ENCODE measurements at regions of chr16 and their contacts with region 1.

Region 1: DNA sequence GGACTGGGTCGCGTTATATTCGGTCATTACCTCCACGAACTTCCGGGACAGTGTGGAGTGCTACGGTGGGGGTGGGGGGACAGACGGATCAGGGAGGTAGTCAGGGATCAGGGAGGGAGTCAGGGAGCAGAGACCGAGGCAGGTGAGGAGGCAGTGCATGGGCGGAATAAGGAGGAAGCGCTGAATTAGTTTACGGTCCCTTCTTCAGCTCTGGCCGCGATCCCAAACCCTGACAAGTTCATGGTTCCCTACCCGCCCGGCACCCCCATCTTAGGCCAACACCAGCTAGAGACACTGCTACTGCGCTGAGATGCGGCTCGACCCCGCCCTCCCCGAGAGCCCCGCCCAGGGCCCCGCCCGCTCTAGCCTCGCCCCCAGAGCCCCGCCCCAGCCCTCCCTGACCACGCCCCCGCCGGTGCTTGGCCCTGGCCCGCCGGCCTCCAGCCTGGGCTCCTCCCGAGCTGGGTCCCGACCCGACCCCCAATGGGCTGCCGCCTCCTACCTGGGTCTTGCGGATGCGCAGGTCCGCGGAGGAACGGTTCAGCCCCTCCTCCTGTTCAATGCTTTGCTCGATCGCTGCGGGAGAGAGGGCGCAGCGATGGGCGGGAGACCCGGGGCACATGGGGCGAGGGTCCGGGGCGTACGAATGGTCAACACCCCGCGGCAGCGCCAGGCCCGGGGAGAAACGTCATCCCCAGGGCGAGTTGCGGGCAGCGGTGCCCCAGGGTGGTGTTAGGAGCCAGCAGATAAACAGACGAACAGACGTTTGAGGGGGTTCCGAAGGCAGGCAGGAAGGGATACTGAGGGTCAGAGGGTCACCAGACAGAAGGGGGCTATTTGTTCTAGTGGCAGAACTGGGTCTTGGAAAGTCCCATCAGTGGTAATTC is 12.2 kb downstream of the HSD3B7 start:
- DNase-seq: peak in 1 of 2 donors; percentile 90
- H3K4me3 ChIP-seq: peak overlapping the region; percentile 65 to 78
- H3K27ac ChIP-seq: peak overlapping the region; percentile 90 to 94
- H3K4me1 ChIP-seq: peaks cover 9 to 27% of the 10 kb centered on the region in 2 donors
- H3K27me3 ChIP-seq: no peaks in the 10 kb centered on the region
- CTCF ChIP-seq: no peak

Region 2: DNA sequence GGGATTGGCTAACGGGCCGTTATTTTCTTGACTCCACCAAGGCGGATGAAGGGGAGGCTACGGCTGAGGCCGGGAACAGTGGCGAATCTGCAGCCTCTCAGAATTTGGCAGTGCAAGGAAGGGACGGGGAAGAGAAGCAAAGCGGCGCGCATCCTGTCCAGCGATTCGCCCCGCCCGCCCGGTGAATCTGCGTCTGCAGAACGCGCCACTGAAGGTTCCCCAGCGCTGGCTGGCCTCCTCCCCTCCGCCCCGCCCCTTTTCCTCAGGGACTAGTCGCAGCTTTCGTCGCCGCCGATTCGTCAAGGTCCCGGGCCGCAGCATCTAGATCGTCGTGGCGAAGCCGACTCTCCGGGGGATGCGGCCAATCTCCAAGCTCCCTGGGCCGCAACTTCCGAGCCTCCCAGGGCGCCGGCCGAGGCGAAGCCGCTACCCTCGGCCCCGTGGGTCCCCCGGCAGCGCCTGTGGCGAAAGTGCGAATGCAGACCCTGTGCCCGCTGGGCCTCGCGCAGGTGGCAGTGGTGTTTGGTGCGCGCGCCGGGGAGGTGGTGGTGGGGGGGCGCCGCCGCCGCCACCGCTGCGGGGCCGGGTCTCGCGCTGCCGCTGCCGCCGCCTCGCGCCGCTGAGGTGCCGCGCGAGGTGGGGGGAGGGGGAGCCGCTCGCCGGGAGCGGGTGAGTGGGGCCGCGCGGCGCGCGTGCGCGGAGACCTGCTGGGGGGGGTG is 39.6 kb before region 1 on chr16 and contains the start of gene SETD1A:
- intact Hi-C with region 1: loop called (anchors 5 kb)
- DNase-seq: peak; percentile 81 to 98
- H3K4me3 ChIP-seq: peak within 1 kb of the TSS; percentile 94 to 95
- H3K27ac ChIP-seq: peak within 1 kb of the TSS; percentile 98 to 99
- H3K4me1 ChIP-seq: peaks cover 3 to 22% of the 10 kb centered on the region in 2 donors
- H3K27me3 ChIP-seq: no peaks in the 10 kb centered on the region
- CTCF ChIP-seq: peak in 1 of 3 experiments; percentile 11
- total RNA-seq, gene SETD1A: 8.3 TPM

Region 3: GRCh38 chr16:30984669-30985400 is 12.4 kb before region 1 on chr16 and contains the start of gene HSD3B7:
- intact Hi-C with region 1: no loop called
- DNase-seq: peak; percentile 69 to 95
- H3K4me3 ChIP-seq: peak within 1 kb of the TSS; percentile 43 to 59
- H3K27ac ChIP-seq: peak within 1 kb of the TSS; percentile 14 to 50
- H3K4me1 ChIP-seq: peaks cover 3 to 11% of the 10 kb centered on the region in 2 donors
- H3K27me3 ChIP-seq: no peaks in the 10 kb centered on the region
- CTCF ChIP-seq: peak; percentile 94 to 95 (median 95)
- total RNA-seq, gene HSD3B7: 35.2 TPM

Region 4: GRCh38 chr16:31032736-31033708 is 35.8 kb after region 1 on chr16 and contains the start of gene STX4:
- intact Hi-C with region 1: loop called (anchors 1 kb)
- DNase-seq: peak; percentile 88 to 99
- H3K4me3 ChIP-seq: peak within 1 kb of the TSS; percentile 83 to 99
- H3K27ac ChIP-seq: peak within 1 kb of the TSS; percentile 92 to 99
- H3K4me1 ChIP-seq: peaks cover 3 to 10% of the 10 kb centered on the region in 2 donors
- H3K27me3 ChIP-seq: no peaks in the 10 kb centered on the region
- CTCF ChIP-seq: no peak
- total RNA-seq, gene STX4: 79.1 TPM

Region 5: DNA sequence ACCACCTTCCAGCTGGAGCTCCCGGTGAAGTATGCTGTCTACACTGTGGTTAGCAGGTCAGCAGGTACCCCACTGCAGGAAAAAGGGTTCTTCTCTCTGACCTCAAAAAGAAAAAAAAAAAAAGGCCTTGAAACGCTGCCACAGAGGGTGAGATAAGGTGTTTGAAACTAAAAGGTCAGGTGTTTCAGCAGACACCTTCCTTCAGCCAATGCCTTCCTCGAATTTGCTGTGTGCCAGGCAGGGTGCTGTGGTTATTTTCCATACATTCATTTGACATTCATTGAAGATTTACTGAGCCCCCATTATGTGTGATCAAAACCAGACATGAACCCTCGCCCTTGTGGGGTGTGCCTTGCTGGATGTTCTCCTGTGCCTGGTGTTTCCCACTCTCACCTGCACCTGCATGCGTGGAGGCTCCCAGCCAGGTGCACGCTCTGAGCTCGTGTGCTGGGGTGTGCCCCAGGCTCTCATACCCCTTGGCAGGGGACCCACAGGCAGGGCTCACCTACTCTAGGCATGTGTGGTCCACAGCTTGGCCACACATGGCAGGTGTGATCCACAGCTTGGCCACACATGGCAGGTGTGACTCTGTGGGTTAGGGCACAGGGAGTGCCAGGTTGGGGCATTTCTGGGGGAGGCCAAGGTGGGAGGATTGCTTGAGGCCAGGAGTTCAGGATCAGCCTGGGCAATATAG is 380.1 kb after region 1 on chr16:
- intact Hi-C with region 1: no loop called
- DNase-seq: no peak
- H3K4me3 ChIP-seq: no peak overlapping the region
- H3K27ac ChIP-seq: no peak overlapping the region
- H3K4me1 ChIP-seq: no peaks in the 10 kb centered on the region
- H3K27me3 ChIP-seq: no peaks in the 10 kb centered on the region
- CTCF ChIP-seq: no peak